Left ventricle myocardium superior (tissue), 1 donor: ENCODE measurements at regions of chr5 and their contacts with region 1.

Region 1: GRCh38 chr5:89988998-89989655 is 420.4 kb downstream of the CETN3 start:
- DNase-seq: no peak
- ATAC-seq: peak; percentile 88

Region 2: DNA sequence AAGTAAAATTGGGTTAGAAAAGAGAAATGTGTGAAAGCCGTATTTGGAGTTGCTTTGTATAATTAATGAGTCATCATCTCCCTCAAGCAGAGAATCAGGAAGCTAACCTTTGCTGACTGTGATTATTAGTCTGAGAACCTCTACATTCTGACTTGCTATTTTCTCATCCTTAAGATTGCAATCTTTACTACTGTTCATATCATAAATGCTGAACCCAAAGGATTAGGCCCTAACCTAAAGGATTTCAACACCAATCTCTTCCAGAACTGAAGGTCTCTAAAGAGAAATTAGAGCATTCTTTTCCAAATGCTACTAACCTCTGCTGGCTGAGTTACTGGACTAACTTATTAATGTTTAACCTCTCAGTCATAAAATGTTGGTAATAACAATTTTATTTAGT is 568.1 kb before region 1 on chr5:
- intact Hi-C with region 1: no loop called
- DNase-seq: no peak
- ATAC-seq: no peak

Region 3: GRCh38 chr5:89930591-89931392 is 58.3 kb before region 1 on chr5:
- intact Hi-C with region 1: loop called (anchors 10 kb)
- DNase-seq: no peak
- ATAC-seq: peak; percentile 75

Region 4: DNA sequence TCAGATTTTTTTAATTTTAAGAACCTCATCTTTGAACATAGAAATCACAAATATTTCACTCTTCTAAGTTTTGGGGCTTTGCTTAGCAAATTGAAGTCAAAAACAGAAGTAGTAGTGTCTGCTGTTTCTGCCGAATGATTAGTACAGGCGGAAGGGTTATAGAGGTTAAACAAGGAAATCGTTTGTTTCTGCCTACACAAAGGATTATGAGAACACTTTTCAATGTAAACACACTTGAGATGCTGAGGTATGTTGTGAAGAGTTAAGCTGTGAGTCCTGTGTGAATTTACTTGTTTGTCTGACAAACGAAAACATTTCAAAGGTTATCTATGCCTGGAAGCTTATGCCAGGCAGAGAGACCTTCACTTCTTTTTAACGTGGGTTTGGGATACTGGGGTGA is 195.6 kb after region 1 on chr5:
- intact Hi-C with region 1: no loop called
- DNase-seq: no peak
- ATAC-seq: no peak